ENCODE measurements at regions of chr5 and their contacts with region 1.

Region 1: DNA sequence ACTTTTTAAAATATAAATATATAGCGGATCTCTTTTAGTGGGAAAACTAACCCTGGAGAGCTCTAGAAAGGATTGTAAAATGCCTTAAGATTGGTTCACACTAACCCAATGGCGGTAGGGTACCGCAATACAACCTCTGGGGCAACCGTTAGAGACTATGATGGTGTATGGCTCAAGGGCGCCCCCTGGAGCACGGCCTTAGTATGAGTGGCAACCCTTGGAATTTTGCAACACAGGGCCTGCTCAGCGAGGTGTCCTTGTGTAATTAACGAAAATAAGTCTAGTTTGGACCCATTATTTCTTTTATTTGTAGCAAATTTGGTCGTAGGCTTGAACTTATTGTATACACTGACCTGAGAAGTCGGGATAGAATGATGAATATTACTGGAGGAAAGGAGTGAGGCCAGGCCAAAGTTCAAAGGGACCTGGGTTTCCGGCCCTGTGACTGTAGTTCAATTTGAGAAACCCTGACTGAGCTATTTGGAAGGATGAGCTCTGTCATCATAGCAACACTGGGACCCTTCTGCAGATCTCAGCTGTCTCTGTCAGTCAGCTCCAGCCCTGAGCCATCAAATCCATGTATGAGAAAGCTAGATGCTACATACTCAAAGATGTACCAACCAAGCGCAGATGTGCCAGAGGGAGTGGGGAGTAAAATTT is 54.8 kb downstream of the CAMK4 start:
- DNase-seq: peak; percentile 42
- H3K4me3 ChIP-seq: no peak overlapping the region; a peak in 1 of 4 replicates
- H3K27ac ChIP-seq: peak overlapping the region in 1 of 2 experiments; percentile 43; a peak in 1 of 4 replicates
- H3K4me1 ChIP-seq: peaks cover 0 to 20% of the 10 kb centered on the region in 2 experiments; a peak in 2 of 4 replicates
- H3K27me3 ChIP-seq: no peaks in the 10 kb centered on the region
- CTCF ChIP-seq: peak; percentile 76
- EP300 ChIP-seq: no peak
- RAD21 ChIP-seq: peak; percentile 71

Region 2: DNA sequence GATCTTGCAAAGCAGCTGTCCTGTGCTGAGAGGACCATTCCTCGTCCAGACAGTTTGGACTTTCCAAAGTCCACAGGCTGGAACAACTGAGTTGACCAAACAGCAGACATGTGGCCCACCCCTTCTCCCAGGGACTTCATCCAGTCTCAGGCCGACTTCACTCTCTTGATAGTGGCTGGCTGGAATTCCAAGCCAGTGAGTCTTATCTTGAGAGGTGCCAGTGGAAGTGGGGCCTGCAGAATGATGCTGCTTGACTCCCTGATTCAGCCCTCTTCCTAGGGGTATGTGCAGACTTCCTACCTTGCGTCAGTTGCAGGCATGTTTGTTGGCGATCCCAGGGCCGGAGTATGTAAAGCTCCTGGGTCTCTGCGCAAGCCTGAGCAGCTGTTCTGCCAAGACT is 338.8 kb before region 1 on chr5:
- CTCF ChIA-PET with region 1: no interaction called
- POLR2A ChIA-PET with region 1: no interaction called
- DNase-seq: no peak
- H3K4me3 ChIP-seq: no peak overlapping the region
- H3K27ac ChIP-seq: no peak overlapping the region
- H3K4me1 ChIP-seq: no peaks in the 10 kb centered on the region
- H3K27me3 ChIP-seq: no peaks in the 10 kb centered on the region
- CTCF ChIP-seq: no peak
- EP300 ChIP-seq: no peak
- RAD21 ChIP-seq: no peak

Region 3: GRCh38 chr5:111252799-111253545 is 26.0 kb before region 1 on chr5:
- CTCF ChIA-PET with region 1: interaction called, 26 read pairs
- POLR2A ChIA-PET with region 1: no interaction called
- DNase-seq: no peak
- H3K4me3 ChIP-seq: no peak overlapping the region
- H3K27ac ChIP-seq: no peak overlapping the region
- H3K4me1 ChIP-seq: peaks cover 0 to 23% of the 10 kb centered on the region in 2 experiments; a peak in 2 of 4 replicates
- H3K27me3 ChIP-seq: no peaks in the 10 kb centered on the region
- CTCF ChIP-seq: no peak
- EP300 ChIP-seq: no peak
- RAD21 ChIP-seq: no peak

Region 4: DNA sequence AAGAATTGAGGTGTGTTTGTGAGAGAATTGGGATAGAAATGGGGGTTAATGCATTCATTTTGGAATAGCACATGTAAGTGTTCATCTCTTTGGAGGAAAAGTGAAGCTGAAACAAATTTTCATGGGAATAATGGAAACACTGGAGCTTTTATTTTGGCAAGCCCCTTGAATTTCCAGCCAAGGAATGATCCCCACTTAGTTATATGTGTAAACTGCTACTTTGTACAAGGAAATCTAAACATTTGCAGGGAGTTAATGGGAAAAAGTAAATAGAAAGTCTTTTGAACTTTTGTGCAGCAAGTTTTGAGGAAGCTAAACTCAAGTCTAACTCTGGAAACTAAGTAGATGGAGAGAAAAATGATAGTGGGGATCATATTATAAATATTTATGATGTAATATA is 10.7 kb before region 1 on chr5:
- CTCF ChIA-PET with region 1: interaction called, 19 read pairs
- POLR2A ChIA-PET with region 1: no interaction called
- DNase-seq: no peak
- H3K4me3 ChIP-seq: no peak overlapping the region
- H3K27ac ChIP-seq: no peak overlapping the region
- H3K4me1 ChIP-seq: no peaks in the 10 kb centered on the region
- H3K27me3 ChIP-seq: no peaks in the 10 kb centered on the region
- CTCF ChIP-seq: no peak
- EP300 ChIP-seq: no peak
- RAD21 ChIP-seq: no peak

Region 5: GRCh38 chr5:111379391-111379816 is 100.4 kb after region 1 on chr5:
- CTCF ChIA-PET with region 1: interaction called, 16 read pairs
- POLR2A ChIA-PET with region 1: no interaction called
- DNase-seq: peak; percentile 11
- H3K4me3 ChIP-seq: no peak overlapping the region
- H3K27ac ChIP-seq: peak overlapping the region in 1 of 2 experiments; percentile 86; a peak in 2 of 4 replicates
- H3K4me1 ChIP-seq: peaks cover 6 to 23% of the 10 kb centered on the region in 2 experiments; a peak in 2 of 4 replicates
- H3K27me3 ChIP-seq: no peaks in the 10 kb centered on the region
- CTCF ChIP-seq: no peak
- EP300 ChIP-seq: peak; percentile 40 to 85; a peak in 3 of 4 replicates
- RAD21 ChIP-seq: peak; percentile 29; the same call in 1 of the 2 replicates

Measured in SK-N-SH (cell line).